Psoas muscle (tissue), 8 donors: ENCODE measurements at regions of chr11 and their contacts with region 1.

Region 1: GRCh38 chr11:120172054-120172911 is 34.4 kb upstream of the TRIM29 start:
- DNase-seq: peak; percentile 66 to 82
- ATAC-seq: peak; percentile 70 to 80 (median 78)
- H3K4me3 ChIP-seq: no peak overlapping the region
- H3K27ac ChIP-seq: no peak overlapping the region
- H3K4me1 ChIP-seq: no peaks in the 10 kb centered on the region
- H3K27me3 ChIP-seq: peaks cover 0 to 55% (median 9%) of the 10 kb centered on the region in 3 donors
- CTCF ChIP-seq: peak; percentile 79

Region 2: GRCh38 chr11:119550053-119550752 is 622.1 kb before region 1 on chr11:
- intact Hi-C with region 1: no loop called
- DNase-seq: no peak
- ATAC-seq: no peak
- H3K4me3 ChIP-seq: no peak overlapping the region
- H3K27ac ChIP-seq: no peak overlapping the region
- H3K4me1 ChIP-seq: no peaks in the 10 kb centered on the region
- H3K27me3 ChIP-seq: peaks cover 0 to 4% (median 0%) of the 10 kb centered on the region in 3 donors
- CTCF ChIP-seq: no peak

Region 3: DNA sequence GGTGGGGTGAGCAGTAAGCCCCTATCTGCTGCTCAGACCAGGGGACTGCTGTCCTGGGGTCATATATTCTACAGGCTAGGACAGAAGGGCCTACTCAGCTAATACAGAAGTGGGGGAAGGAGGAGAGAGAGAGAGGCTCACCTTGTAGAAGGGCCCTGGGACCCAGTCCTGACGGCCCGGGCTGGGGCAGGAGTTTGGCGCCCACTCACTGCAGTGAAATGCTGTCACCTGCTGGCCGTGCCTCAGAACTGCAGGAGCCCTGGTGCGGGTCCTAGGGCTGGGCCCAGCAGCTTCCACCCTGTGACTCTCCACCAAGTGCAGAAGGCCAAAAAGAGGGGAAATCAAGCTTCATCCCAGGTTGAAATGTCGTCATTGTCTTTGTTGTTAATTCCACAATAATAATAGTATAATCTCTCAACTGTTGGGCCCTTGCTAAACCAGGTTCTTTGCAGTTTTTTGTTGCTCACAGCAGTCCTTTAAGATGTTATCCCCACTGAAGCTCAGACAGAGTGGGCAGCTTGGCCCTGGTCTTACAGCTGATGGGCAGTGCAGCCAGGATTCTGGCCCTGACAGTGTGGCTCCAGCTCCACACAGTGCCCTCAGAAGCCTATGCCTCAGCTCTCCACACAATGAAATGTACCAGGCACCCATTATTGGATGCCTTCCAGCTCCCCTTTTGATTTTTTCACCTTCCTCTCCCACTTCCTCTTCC is 64.0 kb before region 1 on chr11:
- intact Hi-C with region 1: no loop called
- DNase-seq: peak; percentile 65 to 80
- ATAC-seq: peak; percentile 86 to 92 (median 88)
- H3K4me3 ChIP-seq: no peak overlapping the region
- H3K27ac ChIP-seq: no peak overlapping the region
- H3K4me1 ChIP-seq: no peaks in the 10 kb centered on the region
- H3K27me3 ChIP-seq: peaks cover 0 to 5% (median 2%) of the 10 kb centered on the region in 3 donors
- CTCF ChIP-seq: peak; percentile 99

Region 4: DNA sequence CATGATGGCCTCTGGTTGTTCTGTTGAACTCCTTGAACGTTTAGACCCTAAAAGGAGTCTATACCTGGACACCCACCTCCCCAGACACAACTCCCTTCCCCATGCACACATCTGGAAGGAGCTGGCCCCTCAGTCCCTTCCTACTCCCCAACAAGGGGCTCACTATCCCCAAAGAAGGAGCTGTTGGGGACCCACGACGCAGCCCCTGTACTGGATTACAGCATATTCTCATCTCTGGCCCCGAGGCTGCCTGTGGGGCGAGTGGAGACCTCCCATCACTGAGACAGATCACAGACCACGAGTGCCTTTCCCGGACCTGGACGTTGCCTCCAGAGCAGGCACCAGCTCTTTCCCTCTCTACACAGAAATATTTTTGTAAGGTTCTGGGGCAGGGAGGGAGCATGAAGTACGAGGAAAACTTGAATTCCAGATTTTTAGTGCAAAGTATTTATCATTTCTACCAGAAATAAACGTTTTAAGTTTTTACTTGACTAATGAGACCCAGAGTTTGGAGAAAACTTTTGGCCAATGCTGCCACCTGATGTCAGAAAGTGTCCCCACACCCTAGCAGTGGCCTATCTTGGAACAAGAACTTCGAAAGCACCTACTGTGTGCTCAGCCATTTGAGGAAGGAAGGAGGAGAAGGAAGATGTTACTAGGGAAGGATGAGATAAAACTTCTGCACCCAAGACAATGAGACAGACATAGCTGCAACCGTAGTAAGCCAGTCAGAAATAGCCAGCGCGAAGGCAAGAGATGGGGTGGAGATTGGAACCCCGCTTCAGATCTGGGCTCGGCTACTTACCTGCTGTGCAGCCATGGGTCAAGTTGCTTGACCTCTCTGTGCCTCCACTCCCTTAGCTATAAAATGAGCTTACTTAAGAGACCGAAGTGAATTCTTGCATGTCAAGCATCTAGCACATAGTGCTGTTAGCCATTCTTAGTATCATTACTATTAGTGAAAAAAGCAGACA is 57.5 kb after region 1 on chr11:
- intact Hi-C with region 1: loop called (anchors 1 to 2 kb)
- DNase-seq: no peak
- ATAC-seq: peak in 1 of 4 donors; percentile 57
- H3K4me3 ChIP-seq: no peak overlapping the region
- H3K27ac ChIP-seq: no peak overlapping the region
- H3K4me1 ChIP-seq: no peaks in the 10 kb centered on the region
- H3K27me3 ChIP-seq: peaks cover 0 to 6% (median 0%) of the 10 kb centered on the region in 3 donors
- CTCF ChIP-seq: peak; percentile 64

Region 5: DNA sequence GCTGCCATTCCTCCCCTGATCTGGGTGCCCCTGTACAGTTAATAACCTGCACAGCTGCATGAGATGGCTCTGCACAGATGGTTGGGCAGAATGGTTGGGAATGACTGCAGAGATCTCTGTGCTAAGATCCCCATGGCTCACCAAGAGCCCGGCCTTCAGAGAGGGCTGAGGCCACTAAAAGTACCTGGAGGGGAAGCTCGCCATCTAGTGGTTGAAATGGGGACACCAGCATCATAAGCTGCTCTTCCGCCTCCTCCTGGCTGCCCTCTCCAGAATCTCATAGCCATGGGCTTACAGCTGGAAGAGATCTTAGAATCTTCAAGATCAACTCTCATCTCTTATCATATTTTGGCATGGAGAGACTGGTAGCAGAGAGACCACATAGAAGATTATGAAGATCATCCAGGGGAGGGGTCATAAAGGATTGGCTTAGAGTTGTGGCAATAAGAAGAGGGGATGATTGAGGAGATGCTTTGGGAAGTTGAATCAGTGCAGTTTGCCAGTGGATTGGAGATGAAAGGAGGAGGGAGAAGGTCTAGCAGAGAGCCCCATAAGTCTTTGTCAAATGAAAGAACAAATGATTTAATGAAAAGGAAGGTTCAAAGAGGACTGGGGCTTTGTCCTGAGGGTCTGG is 130.8 kb after region 1 on chr11:
- intact Hi-C with region 1: loop called (anchors 1 to 5 kb)
- DNase-seq: peak; percentile 60 to 68
- ATAC-seq: peak; percentile 67 to 88 (median 81)
- H3K4me3 ChIP-seq: no peak overlapping the region
- H3K27ac ChIP-seq: no peak overlapping the region
- H3K4me1 ChIP-seq: no peaks in the 10 kb centered on the region
- H3K27me3 ChIP-seq: no peaks in the 10 kb centered on the region
- CTCF ChIP-seq: peak; percentile 55